Activated T-helper 1 cell treated with anti-CD3 and anti-CD28 coated beads, Interleukin-12 subunit alpha, Interleukin-12 subunit beta, Interleukin-2, Interleukin-4 antibody, amounts not matched to agents 30 ng/mL and 10 ng/mL and 1 ng/mL, durations not matched to agents 14 hours and 24 hours and 36 hours (primary cell): ENCODE measurements at regions of chr9 and their contacts with region 1.

Region 1: GRCh38 chr9:86318187-86318586 is 35.8 kb upstream of the ISCA1 start:
- DNase-seq: no peak
- H3K4me3 Mint-ChIP-seq: no peak overlapping the region
- H3K27ac Mint-ChIP-seq: no peak overlapping the region
- H3K4me1 Mint-ChIP-seq: peaks cover 21% of the 10 kb centered on the region
- H3K27me3 Mint-ChIP-seq: no peaks in the 10 kb centered on the region

Region 2: GRCh38 chr9:86303316-86303975 is 14.7 kb before region 1 on chr9:
- intact Hi-C with region 1: loop called (anchors 2 kb)
- DNase-seq: peak; percentile 43
- H3K4me3 Mint-ChIP-seq: peak overlapping the region; percentile 19
- H3K27ac Mint-ChIP-seq: peak overlapping the region; percentile 71
- H3K4me1 Mint-ChIP-seq: peaks cover 39% of the 10 kb centered on the region
- H3K27me3 Mint-ChIP-seq: no peaks in the 10 kb centered on the region